Activated naive CD4-positive, alpha-beta T cell treated with anti-CD3 and anti-CD28 coated beads for 36 hours (primary cell): ENCODE measurements at regions of chr7 and their contacts with region 1.

Region 1: GRCh38 chr7:142385491-142386340 is 127.9 kb upstream of the PRSS58 start:
- DNase-seq: peak; percentile 76
- H3K4me3 Mint-ChIP-seq: peak overlapping the region; percentile 32
- H3K27ac Mint-ChIP-seq: peak overlapping the region; percentile 84
- H3K4me1 Mint-ChIP-seq: peaks cover 26% of the 10 kb centered on the region
- H3K27me3 Mint-ChIP-seq: no peaks in the 10 kb centered on the region

Region 2: GRCh38 chr7:142352543-142352942 is 33.2 kb before region 1 on chr7:
- CTCF ChIA-PET with region 1: interaction called, 11 read pairs
- intact Hi-C with region 1: no loop called
- DNase-seq: peak; percentile 52
- H3K4me3 Mint-ChIP-seq: peak overlapping the region; percentile 74
- H3K27ac Mint-ChIP-seq: peak overlapping the region; percentile 73
- H3K4me1 Mint-ChIP-seq: peaks cover 30% of the 10 kb centered on the region
- H3K27me3 Mint-ChIP-seq: no peaks in the 10 kb centered on the region

Region 3: GRCh38 chr7:142438235-142438922 is 52.7 kb after region 1 on chr7:
- CTCF ChIA-PET with region 1: interaction called, 5 read pairs
- intact Hi-C with region 1: loop called (anchors 2 kb)
- DNase-seq: peak; percentile 47
- H3K4me3 Mint-ChIP-seq: no peak overlapping the region
- H3K27ac Mint-ChIP-seq: no peak overlapping the region
- H3K4me1 Mint-ChIP-seq: peaks cover 56% of the 10 kb centered on the region
- H3K27me3 Mint-ChIP-seq: no peaks in the 10 kb centered on the region

Region 4: GRCh38 chr7:142557971-142558582 is 172.4 kb after region 1 on chr7:
- CTCF ChIA-PET with region 1: no interaction called
- intact Hi-C with region 1: no loop called
- DNase-seq: peak; percentile 73
- H3K4me3 Mint-ChIP-seq: peak overlapping the region; percentile 58
- H3K27ac Mint-ChIP-seq: peak overlapping the region; percentile 79
- H3K4me1 Mint-ChIP-seq: peaks cover 8% of the 10 kb centered on the region
- H3K27me3 Mint-ChIP-seq: peaks cover 4% of the 10 kb centered on the region

Region 5: DNA sequence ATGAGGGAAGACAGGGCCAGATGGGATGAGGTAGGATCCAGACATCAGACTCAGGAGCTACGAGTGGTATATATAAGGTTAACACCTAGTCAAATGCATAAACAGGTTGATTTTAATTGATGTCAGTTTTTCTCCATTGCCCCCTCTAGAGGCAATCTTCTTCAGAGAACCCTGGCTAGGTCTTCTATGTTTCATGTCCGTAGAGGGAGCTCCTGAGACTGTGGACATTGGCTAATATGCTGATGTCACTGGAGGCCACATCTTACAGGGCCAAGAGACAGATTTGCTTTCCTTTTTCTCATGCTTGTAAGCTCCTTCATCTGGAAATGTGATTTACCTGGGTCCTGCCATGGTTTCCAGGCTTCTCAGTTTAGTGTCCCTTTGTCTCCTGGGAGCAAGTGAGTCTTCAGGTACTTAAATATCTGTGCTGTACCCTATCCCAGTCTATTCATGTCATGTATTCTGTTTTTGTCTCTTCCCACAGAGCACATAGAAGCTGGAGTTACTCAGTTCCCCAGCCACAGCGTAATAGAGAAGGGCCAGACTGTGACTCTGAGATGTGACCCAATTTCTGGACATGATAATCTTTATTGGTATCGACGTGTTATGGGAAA is 202.0 kb after region 1 on chr7:
- CTCF ChIA-PET with region 1: no interaction called
- intact Hi-C with region 1: loop called (anchors 5 kb)
- DNase-seq: no peak
- H3K4me3 Mint-ChIP-seq: peak overlapping the region; percentile 44
- H3K27ac Mint-ChIP-seq: peak overlapping the region; percentile 70
- H3K4me1 Mint-ChIP-seq: peaks cover 12% of the 10 kb centered on the region
- H3K27me3 Mint-ChIP-seq: no peaks in the 10 kb centered on the region

Region 6: DNA sequence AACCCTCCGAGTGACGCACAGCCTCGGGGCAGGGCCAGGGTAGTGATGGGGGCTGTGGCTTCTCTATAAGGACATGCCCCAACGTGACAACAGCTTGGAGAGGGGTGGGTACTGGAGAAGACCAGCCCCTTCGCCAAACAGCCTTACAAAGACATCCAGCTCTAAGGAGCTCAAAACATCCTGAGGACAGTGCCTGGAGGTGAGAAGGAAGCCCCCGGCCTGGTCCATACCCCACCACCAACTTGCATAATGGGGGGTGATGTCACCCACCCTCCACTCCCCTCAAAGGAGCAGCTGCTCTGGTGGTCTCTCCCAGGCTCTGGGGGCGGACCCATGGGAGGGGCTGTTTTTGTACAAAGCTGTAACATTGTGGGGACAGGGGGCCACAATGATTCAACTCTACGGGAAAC is 400.1 kb after region 1 on chr7:
- CTCF ChIA-PET with region 1: no interaction called
- intact Hi-C with region 1: no loop called
- DNase-seq: peak; percentile 88
- H3K4me3 Mint-ChIP-seq: peak overlapping the region; percentile 73
- H3K27ac Mint-ChIP-seq: peak overlapping the region; percentile 99
- H3K4me1 Mint-ChIP-seq: peaks cover 8% of the 10 kb centered on the region
- H3K27me3 Mint-ChIP-seq: no peaks in the 10 kb centered on the region